Left lung (tissue), 14 donors: ENCODE measurements at regions of chr7 and their contacts with region 1.

Region 1: GRCh38 chr7:56074371-56074791 is 10.3 kb downstream of the SUMF2 start:
- DNase-seq: peak; percentile 78 to 92 (median 84)
- ATAC-seq: peak; percentile 99
- H3K4me3 ChIP-seq: no peak overlapping the region
- H3K27ac ChIP-seq: no peak overlapping the region
- H3K4me1 ChIP-seq: no peaks in the 10 kb centered on the region
- H3K27me3 ChIP-seq: no peaks in the 10 kb centered on the region
- CTCF ChIP-seq: peak; percentile 81 to 94

Region 2: DNA sequence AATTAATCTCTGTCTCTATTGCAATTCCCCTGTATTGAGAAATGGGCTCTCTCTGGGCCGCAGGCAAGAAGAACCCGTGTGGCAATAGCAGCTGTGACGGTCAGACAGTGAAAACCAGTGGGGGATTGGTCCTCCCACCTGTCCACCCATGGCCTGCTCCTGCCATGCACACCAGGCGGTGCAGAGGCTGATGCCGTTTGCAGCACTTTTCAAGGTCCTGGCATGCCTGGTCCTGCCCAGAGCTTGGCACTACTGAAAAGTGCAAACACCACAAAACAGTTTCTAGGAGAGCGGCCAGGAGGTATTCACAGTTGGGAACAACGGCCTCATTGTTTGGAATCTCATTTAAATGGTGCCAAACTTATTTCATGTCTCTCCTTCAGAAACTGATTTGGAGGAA is 64.7 kb before region 1 on chr7:
- intact Hi-C with region 1: loop called in 1 of 2 experiments (anchors 10 kb)
- DNase-seq: peak in 1 of 4 donors; percentile 10
- ATAC-seq: no peak
- H3K4me3 ChIP-seq: no peak overlapping the region
- H3K27ac ChIP-seq: no peak overlapping the region
- H3K4me1 ChIP-seq: no peaks in the 10 kb centered on the region
- H3K27me3 ChIP-seq: no peaks in the 10 kb centered on the region
- CTCF ChIP-seq: no peak